Activated CD4-positive, alpha-beta memory T cell treated with anti-CD3 and anti-CD28 coated beads for 36 hours (primary cell): ENCODE measurements at regions of chr10 and their contacts with region 1.

Region 1: DNA sequence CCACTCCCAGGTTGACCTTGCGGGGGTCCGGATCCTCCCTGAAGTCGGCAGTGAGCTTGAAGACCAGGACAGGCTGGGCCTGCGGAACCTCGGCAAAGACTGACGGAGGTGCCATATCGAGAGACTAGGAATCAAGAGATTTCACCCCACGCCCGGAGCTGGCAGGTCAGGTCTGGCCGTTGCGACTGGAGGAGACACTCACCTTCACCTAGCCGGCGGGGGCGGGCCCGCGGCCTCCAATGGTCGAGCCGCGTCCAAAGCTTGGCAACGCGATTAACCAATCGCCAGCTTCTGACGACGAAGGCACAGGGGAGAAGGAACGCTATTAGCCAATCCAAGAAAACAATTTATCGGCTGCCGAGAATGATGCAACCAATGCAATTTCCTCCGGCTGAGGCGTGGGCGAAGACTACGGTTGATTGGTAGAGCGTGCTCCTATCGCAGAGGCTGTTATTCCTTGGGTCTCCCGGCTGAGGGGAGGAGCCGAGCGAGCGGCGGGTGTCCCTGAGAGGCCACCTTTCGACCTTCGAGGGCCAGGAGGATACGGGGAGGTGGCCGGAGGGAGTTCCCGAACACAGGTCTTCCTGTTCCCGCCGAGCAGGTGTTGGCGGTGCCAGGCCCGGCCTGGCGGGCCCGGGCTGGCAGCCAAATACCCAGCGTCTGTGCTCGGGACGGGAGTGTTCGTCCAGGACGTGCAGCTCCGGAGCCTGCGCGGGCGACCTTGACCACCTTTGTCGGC is at the start of gene GOT1:
- DNase-seq: peak; percentile 98
- H3K4me3 Mint-ChIP-seq: peak within 1 kb of the TSS; percentile 99
- H3K27ac Mint-ChIP-seq: peak within 1 kb of the TSS; percentile 90
- H3K4me1 Mint-ChIP-seq: peaks cover 32% of the 10 kb centered on the region
- H3K27me3 Mint-ChIP-seq: no peaks in the 10 kb centered on the region
- total RNA-seq, gene GOT1: 51.6 to 54.9 TPM

Region 2: GRCh38 chr10:98467506-98468346 is 962.9 kb before region 1 on chr10:
- CTCF ChIA-PET with region 1: interaction called, 3 read pairs
- POLR2A ChIA-PET with region 1: no interaction called
- intact Hi-C with region 1: loop called (anchors 5 kb)
- DNase-seq: peak; percentile 70
- H3K4me3 Mint-ChIP-seq: peak overlapping the region; percentile 80
- H3K27ac Mint-ChIP-seq: no peak overlapping the region
- H3K4me1 Mint-ChIP-seq: peaks cover 4% of the 10 kb centered on the region
- H3K27me3 Mint-ChIP-seq: peaks cover 2% of the 10 kb centered on the region

Region 3: GRCh38 chr10:99203310-99203709 is 227.3 kb before region 1 on chr10:
- CTCF ChIA-PET with region 1: no interaction called
- POLR2A ChIA-PET with region 1: no interaction called
- intact Hi-C with region 1: no loop called
- DNase-seq: no peak
- H3K4me3 Mint-ChIP-seq: no peak overlapping the region
- H3K27ac Mint-ChIP-seq: no peak overlapping the region
- H3K4me1 Mint-ChIP-seq: no peaks in the 10 kb centered on the region
- H3K27me3 Mint-ChIP-seq: no peaks in the 10 kb centered on the region

Region 4: DNA sequence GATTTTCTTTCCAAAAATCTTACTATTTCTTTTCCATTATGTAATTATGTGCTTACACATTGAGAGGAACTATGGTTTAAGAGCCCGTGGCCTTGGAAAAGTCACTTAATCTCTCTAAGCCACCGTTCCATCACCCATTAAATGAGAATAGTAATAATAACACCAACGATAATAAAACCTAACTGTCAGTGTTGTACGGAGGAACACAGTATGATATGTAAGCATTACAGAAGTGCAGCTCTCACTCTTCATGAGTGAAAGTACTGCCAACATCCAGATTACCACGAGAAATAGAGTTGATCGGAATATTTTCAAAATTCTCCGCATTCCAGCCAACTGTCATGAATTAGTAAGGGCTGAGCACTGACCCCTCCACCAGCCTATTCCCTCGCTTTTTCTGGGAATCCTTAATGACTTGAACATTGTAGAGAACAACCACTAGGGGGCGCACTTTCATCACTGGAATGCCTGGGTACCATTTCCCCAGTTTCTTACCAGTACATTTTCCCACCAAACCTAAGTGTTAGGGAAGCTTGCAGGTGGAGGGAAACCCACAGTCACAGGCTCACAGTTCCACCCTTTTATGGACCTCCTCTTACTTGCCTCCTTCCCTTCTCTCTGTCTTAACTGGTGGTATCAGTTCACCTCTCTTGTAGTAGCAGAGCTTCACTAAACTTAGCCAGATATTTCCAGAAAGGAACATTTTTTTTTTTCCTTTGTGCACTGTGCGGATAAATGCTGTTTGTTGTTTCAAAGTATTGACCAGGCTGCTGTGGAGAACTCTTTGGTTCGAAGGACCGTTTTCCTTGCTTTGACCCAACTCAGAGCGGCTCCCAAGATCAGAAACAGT is 129.9 kb after region 1 on chr10:
- CTCF ChIA-PET with region 1: interaction called, 6 read pairs
- POLR2A ChIA-PET with region 1: no interaction called
- intact Hi-C with region 1: loop called (anchors 2 kb)
- DNase-seq: peak; percentile 45
- H3K4me3 Mint-ChIP-seq: no peak overlapping the region
- H3K27ac Mint-ChIP-seq: no peak overlapping the region
- H3K4me1 Mint-ChIP-seq: peaks cover 9% of the 10 kb centered on the region
- H3K27me3 Mint-ChIP-seq: peaks cover 16% of the 10 kb centered on the region

Region 5: GRCh38 chr10:99659031-99659867 is 228.6 kb after region 1 on chr10 and contains the start of gene ENTPD7:
- CTCF ChIA-PET with region 1: interaction called, 5 read pairs
- POLR2A ChIA-PET with region 1: no interaction called
- intact Hi-C with region 1: loop called (anchors 1 kb)
- DNase-seq: peak; percentile 96
- H3K4me3 Mint-ChIP-seq: peak within 1 kb of the TSS; percentile 83
- H3K27ac Mint-ChIP-seq: peak within 1 kb of the TSS; percentile 84
- H3K4me1 Mint-ChIP-seq: peaks cover 18% of the 10 kb centered on the region
- H3K27me3 Mint-ChIP-seq: peaks cover 18% of the 10 kb centered on the region
- total RNA-seq, gene ENTPD7: 3.0 to 3.3 TPM

Region 6: GRCh38 chr10:99732033-99732912 is 301.7 kb after region 1 on chr10 and contains the starts of genes COX15 and CUTC:
- CTCF ChIA-PET with region 1: interaction called, 4 read pairs
- POLR2A ChIA-PET with region 1: interaction called, 8 read pairs
- intact Hi-C with region 1: loop called (anchors 1 kb)
- DNase-seq: peak; percentile 97
- H3K4me3 Mint-ChIP-seq: peak within 1 kb of the TSS; percentile 100
- H3K27ac Mint-ChIP-seq: peak within 1 kb of the TSS; percentile 100
- H3K4me1 Mint-ChIP-seq: peaks cover 29% of the 10 kb centered on the region
- H3K27me3 Mint-ChIP-seq: no peaks in the 10 kb centered on the region
- total RNA-seq, gene COX15: 31.3 to 31.5 TPM
- total RNA-seq, gene CUTC: 26.0 to 26.6 TPM